ENCODE measurements at regions of chr7 and their contacts with region 1.

Region 1: GRCh38 chr7:90403174-90404113 is at the start of gene CLDN12:
- DNase-seq: peak; percentile 89
- ATAC-seq: peak; percentile 95
- total RNA-seq, gene CLDN12: 34.0 TPM

Region 2: DNA sequence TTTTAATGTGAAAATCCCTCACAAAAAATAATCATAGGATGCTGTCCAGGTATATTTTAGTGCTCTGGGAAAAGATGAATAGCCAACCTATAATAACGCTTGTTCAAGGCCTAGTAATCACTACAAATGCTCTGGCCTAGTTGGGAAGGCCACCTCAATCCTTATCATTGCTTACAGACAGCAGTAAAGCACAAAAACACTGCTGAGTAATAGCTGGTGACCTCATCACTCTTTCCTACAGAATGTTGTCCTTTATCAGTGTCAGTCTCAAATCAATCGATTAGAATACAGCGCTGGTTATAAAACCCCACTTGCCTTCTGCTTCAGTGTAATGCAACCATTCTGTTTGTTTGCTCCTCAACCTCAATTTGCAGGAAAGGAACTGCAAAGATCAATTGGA is 321.8 kb before region 1 on chr7:
- intact Hi-C with region 1: no loop called
- DNase-seq: no peak
- ATAC-seq: no peak

Region 3: GRCh38 chr7:90346336-90347125 is 56.9 kb before region 1 on chr7 and contains the start of gene GTPBP10:
- intact Hi-C with region 1: loop called (anchors 5 kb)
- DNase-seq: peak; percentile 96
- ATAC-seq: peak; percentile 100
- total RNA-seq, gene GTPBP10: 25.9 TPM

Measured in left ventricle myocardium superior (tissue), 1 donor.